AG04449 (cell line): ENCODE measurements at regions of chr18 and their contacts with region 1.

Region 1: GRCh38 chr18:57561728-57562423 is 24.6 kb downstream of the FECH start:
- DNase-seq: no peak
- H3K4me3 ChIP-seq: no peak overlapping the region
- CTCF ChIP-seq: peak; percentile 37

Region 2: GRCh38 chr18:56702946-56703345 is 858.9 kb before region 1 on chr18:
- CTCF ChIA-PET with region 1: interaction called, 37 read pairs
- POLR2A ChIA-PET with region 1: no interaction called
- DNase-seq: no peak
- H3K4me3 ChIP-seq: no peak overlapping the region
- CTCF ChIP-seq: no peak

Region 3: GRCh38 chr18:56748698-56749268 is 813.1 kb before region 1 on chr18:
- CTCF ChIA-PET with region 1: interaction called, 97 read pairs
- POLR2A ChIA-PET with region 1: no interaction called
- DNase-seq: peak; percentile 0
- H3K4me3 ChIP-seq: no peak overlapping the region
- CTCF ChIP-seq: peak; percentile 52

Region 4: DNA sequence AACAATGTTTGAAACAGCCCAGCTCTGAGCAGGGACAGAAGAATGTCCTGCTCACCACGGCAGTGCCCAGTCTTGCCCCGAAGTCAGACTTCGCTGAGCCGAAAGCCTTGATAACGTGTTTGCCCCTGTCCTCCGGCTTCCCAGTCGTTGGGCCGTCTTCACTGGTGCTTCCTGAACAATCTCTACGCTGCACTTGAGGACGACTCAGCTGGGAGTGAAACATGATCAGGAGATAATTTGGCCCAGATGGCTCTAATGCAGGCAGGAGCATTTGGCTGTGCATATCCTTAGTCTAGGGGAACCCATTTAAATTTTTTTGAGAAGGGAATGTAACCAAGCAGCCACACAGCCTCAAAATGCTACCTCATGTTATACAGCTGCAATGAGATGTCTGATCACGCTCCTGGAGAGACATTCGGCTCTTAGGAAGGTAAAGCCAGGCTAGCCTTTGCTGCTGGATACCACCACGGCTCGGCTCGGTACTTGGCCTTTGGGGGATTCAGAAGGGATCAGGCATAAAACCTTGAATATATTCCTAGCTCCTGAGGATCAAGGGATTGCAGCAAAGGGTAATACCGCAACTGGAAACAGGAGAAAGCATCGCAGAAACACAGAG is 19.0 kb before region 1 on chr18:
- CTCF ChIA-PET with region 1: interaction called, 22 read pairs
- POLR2A ChIA-PET with region 1: no interaction called
- DNase-seq: peak; percentile 45
- H3K4me3 ChIP-seq: no peak overlapping the region
- CTCF ChIP-seq: no peak

Region 5: GRCh38 chr18:57574866-57575265 is 13.0 kb after region 1 on chr18:
- CTCF ChIA-PET with region 1: interaction called, 32 read pairs
- POLR2A ChIA-PET with region 1: no interaction called
- DNase-seq: no peak
- H3K4me3 ChIP-seq: no peak overlapping the region
- CTCF ChIP-seq: no peak

Region 6: GRCh38 chr18:57621246-57621604 is 59.3 kb after region 1 on chr18:
- CTCF ChIA-PET with region 1: no interaction called
- POLR2A ChIA-PET with region 1: no interaction called
- DNase-seq: no peak
- H3K4me3 ChIP-seq: peak overlapping the region; percentile 72
- CTCF ChIP-seq: no peak

Region 7: GRCh38 chr18:57813245-57813644 is 251.4 kb after region 1 on chr18:
- CTCF ChIA-PET with region 1: no interaction called
- POLR2A ChIA-PET with region 1: no interaction called
- DNase-seq: peak; percentile 92
- H3K4me3 ChIP-seq: no peak overlapping the region
- CTCF ChIP-seq: no peak